ENCODE measurements at regions of chr12 and their contacts with region 1.

Region 1: GRCh38 chr12:105330283-105330930 is at the start of gene C12orf75:
- DNase-seq: peak; percentile 98
- H3K4me3 Mint-ChIP-seq: peak within 1 kb of the TSS; percentile 82
- H3K27ac Mint-ChIP-seq: peak within 1 kb of the TSS; percentile 91
- H3K4me1 Mint-ChIP-seq: peaks cover 72% of the 10 kb centered on the region
- H3K27me3 Mint-ChIP-seq: no peaks in the 10 kb centered on the region
- total RNA-seq, gene C12orf75: 91.4 and 96.1 TPM in 2 replicates

Region 2: DNA sequence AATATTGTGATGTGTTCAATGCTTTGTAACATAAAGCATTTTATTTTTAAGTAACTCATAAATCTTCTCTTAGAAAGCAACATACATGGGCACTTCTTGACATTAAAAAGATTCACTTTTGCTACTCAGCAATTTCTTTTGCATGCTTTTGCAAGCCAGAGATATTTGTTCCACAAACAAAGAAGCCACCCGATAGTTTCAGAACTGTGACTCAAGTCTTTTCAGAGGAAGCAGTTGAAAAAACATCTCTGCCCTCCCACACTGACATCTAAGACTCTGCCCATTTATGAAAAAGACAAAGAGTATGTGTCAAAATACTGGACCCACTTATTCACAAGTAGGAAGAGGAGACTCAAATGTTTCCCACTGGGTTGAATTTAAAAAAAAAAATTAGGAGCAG is 101.9 kb before region 1 on chr12:
- intact Hi-C with region 1: loop called (anchors 2 kb)
- DNase-seq: peak; percentile 74
- H3K4me3 Mint-ChIP-seq: peak overlapping the region; percentile 48
- H3K27ac Mint-ChIP-seq: peak overlapping the region; percentile 67
- H3K4me1 Mint-ChIP-seq: peaks cover 47% of the 10 kb centered on the region
- H3K27me3 Mint-ChIP-seq: no peaks in the 10 kb centered on the region

Region 3: DNA sequence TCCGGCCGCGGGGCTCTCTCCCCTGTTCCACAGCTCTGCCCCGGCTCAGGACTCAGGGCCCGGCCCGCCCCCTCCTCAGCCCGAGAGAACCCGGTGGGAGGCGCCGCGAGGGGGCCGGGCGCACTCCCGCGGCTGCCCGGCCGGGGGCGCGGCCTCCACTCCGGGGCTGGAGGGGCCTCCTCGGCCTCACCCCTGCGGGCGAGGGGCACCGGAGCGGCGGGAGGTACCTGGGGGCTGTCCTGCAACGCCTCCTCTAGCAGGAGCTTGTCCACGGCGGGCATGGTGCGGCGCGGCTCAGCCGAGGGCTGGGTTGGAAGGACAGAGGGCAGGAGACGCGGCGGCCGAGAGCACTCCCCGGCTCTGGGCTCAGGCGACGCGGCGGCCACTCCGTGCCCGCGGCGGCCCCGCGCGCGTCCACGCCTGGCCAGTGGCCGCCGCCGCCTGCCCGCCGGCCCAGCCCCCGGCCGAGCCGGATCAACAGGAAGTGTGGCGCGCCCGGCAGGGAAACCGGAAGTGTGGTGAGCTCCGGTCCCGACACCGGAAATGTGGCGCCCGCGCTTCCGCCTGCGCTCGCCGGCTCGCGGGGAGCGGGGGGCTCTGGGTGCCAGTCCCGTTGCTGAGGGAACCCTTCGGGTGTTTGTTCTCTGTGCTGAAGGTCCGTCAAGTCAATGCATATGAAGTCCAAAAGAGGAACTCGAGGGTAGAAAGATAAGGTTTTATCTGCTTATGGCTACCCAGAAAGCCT is 94.5 kb before region 1 on chr12 and contains the start of gene APPL2:
- intact Hi-C with region 1: loop called (anchors 2 kb)
- DNase-seq: peak; percentile 94
- H3K4me3 Mint-ChIP-seq: peak within 1 kb of the TSS; percentile 87
- H3K27ac Mint-ChIP-seq: peak within 1 kb of the TSS; percentile 85
- H3K4me1 Mint-ChIP-seq: peaks cover 32% of the 10 kb centered on the region
- H3K27me3 Mint-ChIP-seq: peaks cover 2% of the 10 kb centered on the region
- total RNA-seq, gene APPL2: 18.2 and 20.5 TPM in 2 replicates

Region 4: GRCh38 chr12:105279460-105280056 is 50.8 kb before region 1 on chr12:
- intact Hi-C with region 1: loop called (anchors 5 kb)
- DNase-seq: peak; percentile 84
- H3K4me3 Mint-ChIP-seq: no peak overlapping the region
- H3K27ac Mint-ChIP-seq: no peak overlapping the region
- H3K4me1 Mint-ChIP-seq: peaks cover 4% of the 10 kb centered on the region
- H3K27me3 Mint-ChIP-seq: peaks cover 12% of the 10 kb centered on the region

Region 5: DNA sequence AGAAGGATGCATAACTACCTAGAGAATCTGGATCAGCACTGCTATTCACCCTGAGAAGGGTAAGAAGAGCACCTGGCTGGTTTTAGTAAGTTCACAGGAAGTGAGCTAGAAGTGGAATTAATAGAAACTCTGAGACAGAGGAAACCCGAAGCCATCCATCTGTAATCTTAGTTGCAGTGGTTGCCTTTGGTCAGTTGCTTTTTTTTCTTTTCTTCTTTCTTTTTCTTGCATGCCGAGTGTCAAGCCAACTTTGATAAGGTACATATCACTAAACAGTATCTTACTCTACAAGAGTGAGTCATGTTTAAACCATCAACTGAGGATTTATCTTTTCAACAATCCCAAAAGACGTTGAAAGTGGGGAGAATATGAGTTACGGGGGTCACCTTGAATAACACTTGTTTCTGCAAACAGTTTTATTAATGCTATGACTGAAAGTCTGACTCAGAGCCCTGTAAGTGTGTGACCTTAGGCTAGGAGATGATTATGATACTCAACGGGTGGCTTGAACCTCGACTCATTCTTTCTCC is 26.8 kb after region 1 on chr12:
- intact Hi-C with region 1: loop called (anchors 1 kb)
- DNase-seq: no peak
- H3K4me3 Mint-ChIP-seq: peak overlapping the region; percentile 37
- H3K27ac Mint-ChIP-seq: peak overlapping the region; percentile 89
- H3K4me1 Mint-ChIP-seq: peaks cover 35% of the 10 kb centered on the region
- H3K27me3 Mint-ChIP-seq: no peaks in the 10 kb centered on the region

Region 6: GRCh38 chr12:105995961-105996431 is 665.6 kb after region 1 on chr12:
- intact Hi-C with region 1: no loop called
- DNase-seq: no peak
- H3K4me3 Mint-ChIP-seq: no peak overlapping the region
- H3K27ac Mint-ChIP-seq: no peak overlapping the region
- H3K4me1 Mint-ChIP-seq: no peaks in the 10 kb centered on the region
- H3K27me3 Mint-ChIP-seq: peaks cover 14% of the 10 kb centered on the region

Region 7: GRCh38 chr12:106302401-106303201 is 972.2 kb after region 1 on chr12 and contains the start of gene TCP11L2:
- intact Hi-C with region 1: loop called (anchors 5 kb)
- DNase-seq: peak; percentile 97
- H3K4me3 Mint-ChIP-seq: peak within 1 kb of the TSS; percentile 97
- H3K27ac Mint-ChIP-seq: peak within 1 kb of the TSS; percentile 100
- H3K4me1 Mint-ChIP-seq: peaks cover 38% of the 10 kb centered on the region
- H3K27me3 Mint-ChIP-seq: no peaks in the 10 kb centered on the region
- total RNA-seq, gene TCP11L2: 3.2 and 4.5 TPM in 2 replicates

Region 8: DNA sequence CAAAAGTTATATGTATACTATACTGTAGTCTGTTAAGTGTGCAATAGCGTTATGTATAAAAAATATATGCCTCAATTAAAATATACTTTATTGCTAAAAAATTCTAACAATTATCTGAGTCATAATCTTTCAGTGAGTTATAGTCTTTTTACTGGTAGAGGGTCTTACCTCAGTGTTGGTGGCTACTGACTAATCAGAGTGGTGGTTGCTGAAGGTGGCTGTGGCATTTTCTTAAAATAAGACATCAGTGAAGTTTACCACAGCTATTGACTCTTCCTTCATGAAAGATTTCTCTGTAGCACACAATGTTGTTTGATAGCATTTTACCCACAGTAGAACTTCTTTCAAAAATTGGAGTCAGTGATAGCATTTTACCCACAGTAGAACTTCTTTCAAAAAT is 1050.5 kb after region 1 on chr12:
- intact Hi-C with region 1: no loop called
- DNase-seq: no peak
- H3K4me3 Mint-ChIP-seq: no peak overlapping the region
- H3K27ac Mint-ChIP-seq: no peak overlapping the region
- H3K4me1 Mint-ChIP-seq: peaks cover 16% of the 10 kb centered on the region
- H3K27me3 Mint-ChIP-seq: no peaks in the 10 kb centered on the region